ENCODE measurements at regions of chr1 and their contacts with region 1.

Region 1: DNA sequence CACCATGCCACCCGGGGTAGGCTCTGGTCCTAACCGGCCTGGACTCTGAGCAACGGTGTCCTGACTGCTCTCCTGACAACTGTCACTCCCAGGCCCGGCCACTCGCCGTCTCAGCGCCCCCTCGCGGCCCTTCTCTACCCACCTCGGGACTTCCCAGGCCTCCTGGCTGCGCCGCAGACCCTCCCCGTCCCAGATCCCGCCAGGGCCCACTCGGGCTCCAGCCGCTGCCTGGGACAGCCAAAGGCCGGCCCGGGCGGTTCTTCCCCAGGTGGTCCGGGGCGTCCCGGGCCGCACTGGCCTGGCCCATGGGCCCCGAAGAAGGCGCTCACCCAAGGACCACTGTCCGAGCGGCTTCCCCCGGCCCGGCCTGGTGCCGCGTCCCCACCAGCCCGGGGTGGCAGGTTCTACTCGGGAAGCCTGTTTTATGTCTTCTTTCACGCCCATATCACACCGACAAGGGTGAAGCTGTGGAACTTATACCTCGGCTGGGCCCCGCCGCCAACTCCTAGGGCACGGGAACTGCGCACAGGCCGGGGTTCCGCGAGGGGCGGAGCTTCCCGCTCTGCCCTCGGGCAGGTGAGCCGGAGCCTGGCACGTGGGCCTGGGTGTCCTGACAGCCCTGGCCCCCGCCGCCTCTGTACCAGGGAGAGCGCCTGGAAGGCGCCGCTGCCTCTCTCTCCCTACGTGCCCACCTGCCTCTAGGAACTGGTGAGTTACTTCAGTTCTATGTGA is 138.3 kb downstream of the TTLL7 start:
- DNase-seq: peak; percentile 87
- ATAC-seq: peak; percentile 91
- H3K4me3 Mint-ChIP-seq: peak overlapping the region; percentile 71
- H3K27ac Mint-ChIP-seq: peak overlapping the region; percentile 72
- H3K4me1 Mint-ChIP-seq: peaks cover 16% of the 10 kb centered on the region
- H3K27me3 Mint-ChIP-seq: peaks cover 2% of the 10 kb centered on the region

Region 2: GRCh38 chr1:82775402-82776000 is 1085.2 kb before region 1 on chr1:
- CTCF ChIA-PET with region 1: no interaction called
- POLR2A ChIA-PET with region 1: no interaction called
- intact Hi-C with region 1: loop called in 1 of 2 experiments (anchors 2 kb)
- DNase-seq: peak; percentile 73
- ATAC-seq: peak; percentile 51
- H3K4me3 Mint-ChIP-seq: no peak overlapping the region
- H3K27ac Mint-ChIP-seq: no peak overlapping the region
- H3K4me1 Mint-ChIP-seq: no peaks in the 10 kb centered on the region
- H3K27me3 Mint-ChIP-seq: no peaks in the 10 kb centered on the region

Region 3: GRCh38 chr1:83849191-83850061 is 11.2 kb before region 1 on chr1:
- CTCF ChIA-PET with region 1: interaction called, 11 read pairs
- POLR2A ChIA-PET with region 1: no interaction called
- intact Hi-C with region 1: no loop called
- DNase-seq: no peak
- ATAC-seq: peak; percentile 85
- H3K4me3 Mint-ChIP-seq: no peak overlapping the region
- H3K27ac Mint-ChIP-seq: no peak overlapping the region
- H3K4me1 Mint-ChIP-seq: peaks cover 11% of the 10 kb centered on the region
- H3K27me3 Mint-ChIP-seq: no peaks in the 10 kb centered on the region

Measured in activated CD4-positive, alpha-beta T cell treated with anti-CD3 and anti-CD28 coated beads for 36 hours (primary cell).